Naive thymus-derived CD4-positive, alpha-beta T cell (primary cell): ENCODE measurements at regions of chr9 and their contacts with region 1.

Region 1: GRCh38 chr9:15104826-15105420 is 194.7 kb upstream of the FREM1 start:
- DNase-seq: peak; percentile 7 to 66 (median 52)
- ATAC-seq: peak; percentile 80
- H3K4me3 ChIP-seq: no peak overlapping the region
- H3K4me3 Mint-ChIP-seq: no peak overlapping the region
- H3K27ac ChIP-seq: no peak overlapping the region
- H3K27ac Mint-ChIP-seq: no peak overlapping the region
- H3K4me1 ChIP-seq: no peaks in the 10 kb centered on the region
- H3K4me1 Mint-ChIP-seq: peaks cover 0 to 7% (median 2%) of the 10 kb centered on the region in 7 donors
- H3K27me3 ChIP-seq: no peaks in the 10 kb centered on the region
- H3K27me3 Mint-ChIP-seq: peaks cover 0 to 11% (median 6%) of the 10 kb centered on the region in 5 donors

Region 2: DNA sequence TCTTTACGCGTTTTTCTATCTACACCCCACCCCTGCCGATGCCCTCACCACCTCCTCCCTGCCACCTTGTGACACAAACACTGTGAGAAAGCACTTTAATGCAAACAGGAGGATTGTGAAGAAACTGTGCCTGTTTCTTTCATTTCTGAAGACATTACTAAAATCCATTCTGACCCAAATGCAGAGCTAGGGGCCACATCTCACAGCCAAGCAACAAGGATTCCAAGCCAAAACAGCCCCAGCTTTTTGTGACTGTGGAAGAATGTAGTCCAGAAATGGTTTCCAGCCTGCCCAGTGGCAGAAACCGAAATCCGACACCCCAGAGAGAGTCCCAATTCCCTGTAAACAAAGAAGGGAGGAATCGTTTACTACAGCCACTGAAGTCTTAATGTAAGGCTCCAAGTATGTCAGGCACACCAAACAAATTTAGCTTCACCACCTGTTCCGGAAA is 11.2 kb after region 1 on chr9:
- CTCF ChIA-PET with region 1: no interaction called
- POLR2A ChIA-PET with region 1: no interaction called
- intact Hi-C with region 1: loop called in 1 of 2 experiments (anchors 1 kb)
- DNase-seq: no peak
- ATAC-seq: no peak
- H3K4me3 ChIP-seq: no peak overlapping the region
- H3K4me3 Mint-ChIP-seq: no peak overlapping the region
- H3K27ac ChIP-seq: no peak overlapping the region
- H3K27ac Mint-ChIP-seq: no peak overlapping the region
- H3K4me1 ChIP-seq: peaks cover 0 to under 1% of the 10 kb centered on the region in 2 donors
- H3K4me1 Mint-ChIP-seq: peaks cover under 1 to 22% (median 13%) of the 10 kb centered on the region in 7 donors
- H3K27me3 ChIP-seq: no peaks in the 10 kb centered on the region
- H3K27me3 Mint-ChIP-seq: peaks cover 0 to 12% (median 0%) of the 10 kb centered on the region in 5 donors

Region 3: DNA sequence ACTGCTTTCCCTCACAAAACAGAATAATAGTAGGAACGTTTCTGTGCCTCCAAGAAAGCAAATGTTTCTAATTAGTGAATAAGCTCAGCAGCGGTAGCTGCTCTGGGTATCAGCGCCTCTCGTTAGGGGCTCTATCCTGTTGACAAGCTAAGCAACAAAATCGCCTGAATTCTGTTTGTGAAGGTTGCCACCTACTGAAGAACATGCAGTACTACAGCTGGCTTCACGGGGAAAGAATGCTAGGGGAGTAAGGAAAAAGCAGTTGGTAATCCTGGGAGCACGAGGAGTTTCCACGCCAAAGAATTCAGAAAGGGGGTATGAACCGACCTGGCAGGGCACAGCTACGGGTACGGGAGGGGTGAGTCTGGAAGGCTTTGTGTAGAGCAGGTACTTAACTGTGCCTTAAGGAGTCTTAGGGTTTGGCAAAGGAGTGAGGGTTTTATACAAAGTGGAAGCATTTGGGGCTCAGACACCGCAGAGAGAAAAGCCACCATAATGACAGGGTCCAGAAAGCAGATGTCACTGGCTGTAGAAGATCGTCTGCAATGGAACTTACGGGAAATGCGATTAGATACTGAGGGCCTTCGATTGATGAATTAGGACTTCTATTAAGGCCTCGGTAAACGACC is 30.4 kb after region 1 on chr9:
- CTCF ChIA-PET with region 1: interaction called, 47 read pairs
- POLR2A ChIA-PET with region 1: interaction called, 3 read pairs
- intact Hi-C with region 1: loop called (anchors 1 kb)
- DNase-seq: peak in 8 of 9 donors; percentile 27 to 73 (median 59)
- ATAC-seq: peak; percentile 92
- H3K4me3 ChIP-seq: no peak overlapping the region
- H3K4me3 Mint-ChIP-seq: peak overlapping the region in 6 of 10 donors; percentile 3 to 40 (median 32)
- H3K27ac ChIP-seq: no peak overlapping the region
- H3K27ac Mint-ChIP-seq: peak overlapping the region in 1 of 9 donors; percentile 32
- H3K4me1 ChIP-seq: no peaks in the 10 kb centered on the region
- H3K4me1 Mint-ChIP-seq: peaks cover 4 to 10% (median 5%) of the 10 kb centered on the region in 7 donors
- H3K27me3 ChIP-seq: no peaks in the 10 kb centered on the region
- H3K27me3 Mint-ChIP-seq: peaks cover 0 to 4% (median 3%) of the 10 kb centered on the region in 5 donors

Region 4: GRCh38 chr9:15142878-15143534 is 38.1 kb after region 1 on chr9:
- CTCF ChIA-PET with region 1: interaction called, 3 read pairs
- POLR2A ChIA-PET with region 1: no interaction called
- intact Hi-C with region 1: loop called (anchors 2 kb)
- DNase-seq: peak in 7 of 9 donors; percentile 7 to 45 (median 22)
- ATAC-seq: peak; percentile 83
- H3K4me3 ChIP-seq: no peak overlapping the region
- H3K4me3 Mint-ChIP-seq: no peak overlapping the region
- H3K27ac ChIP-seq: no peak overlapping the region
- H3K27ac Mint-ChIP-seq: no peak overlapping the region
- H3K4me1 ChIP-seq: no peaks in the 10 kb centered on the region
- H3K4me1 Mint-ChIP-seq: peaks cover 0 to 9% (median 3%) of the 10 kb centered on the region in 7 donors
- H3K27me3 ChIP-seq: no peaks in the 10 kb centered on the region
- H3K27me3 Mint-ChIP-seq: peaks cover 0 to 14% (median 5%) of the 10 kb centered on the region in 5 donors

Region 5: DNA sequence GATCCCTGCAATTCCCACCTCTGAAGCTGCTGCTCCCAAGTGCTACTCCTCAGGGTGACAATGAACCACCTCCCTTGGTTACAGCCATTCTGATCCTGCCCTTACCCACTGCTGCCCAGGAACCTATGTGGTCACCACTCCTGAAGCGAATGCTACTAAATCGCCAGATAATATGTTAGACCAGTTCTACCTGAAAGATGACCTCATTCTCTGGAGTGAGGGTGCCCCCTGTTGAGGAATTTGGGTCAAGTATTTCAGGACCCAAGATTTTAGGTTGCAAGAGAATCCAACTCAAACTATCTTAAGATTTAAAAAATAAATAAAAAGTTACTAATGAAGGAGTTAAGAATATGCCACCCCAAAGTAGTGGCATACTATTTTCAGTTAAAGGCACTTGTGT is 312.0 kb after region 1 on chr9:
- CTCF ChIA-PET with region 1: no interaction called
- POLR2A ChIA-PET with region 1: no interaction called
- intact Hi-C with region 1: loop called in 1 of 2 experiments (anchors 2 kb)
- DNase-seq: peak in 7 of 9 donors; percentile 21 to 45 (median 39)
- ATAC-seq: no peak
- H3K4me3 ChIP-seq: no peak overlapping the region
- H3K4me3 Mint-ChIP-seq: no peak overlapping the region
- H3K27ac ChIP-seq: no peak overlapping the region
- H3K27ac Mint-ChIP-seq: no peak overlapping the region
- H3K4me1 ChIP-seq: no peaks in the 10 kb centered on the region
- H3K4me1 Mint-ChIP-seq: peaks cover 0 to 10% (median 2%) of the 10 kb centered on the region in 7 donors
- H3K27me3 ChIP-seq: no peaks in the 10 kb centered on the region
- H3K27me3 Mint-ChIP-seq: peaks cover 0 to 7% (median 0%) of the 10 kb centered on the region in 5 donors

Region 6: DNA sequence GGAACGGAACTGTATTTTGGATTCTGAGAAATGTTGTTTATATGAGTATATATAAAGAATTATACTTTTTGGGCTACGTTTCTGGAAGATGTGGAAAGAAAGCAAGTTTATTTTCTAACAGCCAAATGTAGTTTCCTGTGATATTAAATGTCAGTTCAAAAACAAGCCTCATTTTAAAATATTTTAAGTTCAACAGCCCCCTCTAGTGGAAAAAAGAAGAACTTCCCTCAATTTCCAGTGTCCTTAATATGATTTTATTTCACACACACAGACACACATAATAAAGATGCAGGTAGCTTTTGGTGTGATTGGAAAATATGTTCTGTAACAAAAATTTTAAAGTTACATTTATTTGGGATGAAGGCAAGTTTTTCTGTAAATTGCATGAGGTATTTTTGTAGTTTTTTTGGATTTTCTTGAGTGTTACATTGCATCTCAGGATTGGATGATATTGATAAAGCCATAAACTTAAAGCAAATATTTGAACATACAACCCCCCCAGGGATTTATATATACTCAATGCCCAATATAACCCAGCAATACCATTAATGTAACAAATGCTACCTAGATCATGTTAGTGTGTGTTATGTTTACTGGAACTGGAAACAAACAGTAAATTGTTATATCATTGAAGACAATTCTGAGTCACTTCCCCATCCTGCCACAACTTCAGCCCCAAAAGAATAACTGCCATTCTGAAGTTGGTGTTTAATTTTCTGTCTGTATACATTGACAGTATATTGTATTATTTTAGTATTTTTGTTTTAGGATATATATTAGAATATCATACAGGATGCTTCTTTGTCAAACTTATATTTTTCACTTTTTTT is 501.9 kb after region 1 on chr9:
- CTCF ChIA-PET with region 1: no interaction called
- POLR2A ChIA-PET with region 1: no interaction called
- intact Hi-C with region 1: loop called (anchors 1 to 10 kb)
- DNase-seq: peak in 7 of 9 donors; percentile 29 to 71 (median 60)
- ATAC-seq: peak; percentile 55
- H3K4me3 ChIP-seq: no peak overlapping the region
- H3K4me3 Mint-ChIP-seq: no peak overlapping the region
- H3K27ac ChIP-seq: no peak overlapping the region
- H3K27ac Mint-ChIP-seq: no peak overlapping the region
- H3K4me1 ChIP-seq: no peaks in the 10 kb centered on the region
- H3K4me1 Mint-ChIP-seq: peaks cover 0 to 7% (median 0%) of the 10 kb centered on the region in 7 donors
- H3K27me3 ChIP-seq: no peaks in the 10 kb centered on the region
- H3K27me3 Mint-ChIP-seq: no peaks in the 10 kb centered on the region

Region 7: DNA sequence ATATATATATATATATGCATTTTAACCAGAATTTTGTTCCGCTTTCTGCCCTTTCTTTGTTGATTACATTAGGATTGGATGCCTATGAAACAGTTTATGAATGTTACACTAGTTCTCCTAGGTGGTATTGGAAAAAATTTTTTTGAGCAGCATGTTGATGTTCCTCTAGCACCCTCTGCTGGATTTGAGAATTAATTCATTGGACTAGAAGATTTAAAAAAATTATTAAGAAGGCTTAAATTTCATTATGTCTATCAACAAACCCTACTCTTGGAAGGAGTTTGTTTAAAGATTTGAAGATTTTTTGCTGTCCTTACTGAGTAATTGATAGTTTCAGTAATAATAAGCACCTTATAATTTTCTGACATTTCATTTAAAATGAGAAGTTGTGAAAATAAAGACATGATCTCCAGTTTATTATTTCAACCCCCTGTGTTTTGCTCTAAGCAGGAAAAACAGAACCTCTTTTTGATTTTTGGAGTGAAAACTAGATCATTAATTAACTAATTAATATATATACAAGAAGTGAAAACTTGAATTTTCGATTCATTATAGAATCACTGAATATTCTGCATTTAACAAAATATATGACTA is 537.5 kb after region 1 on chr9:
- CTCF ChIA-PET with region 1: no interaction called
- POLR2A ChIA-PET with region 1: no interaction called
- intact Hi-C with region 1: loop called in 1 of 2 experiments (anchors 1 kb)
- DNase-seq: peak in 5 of 9 donors; percentile 10 to 31 (median 18)
- ATAC-seq: no peak
- H3K4me3 ChIP-seq: no peak overlapping the region
- H3K4me3 Mint-ChIP-seq: no peak overlapping the region
- H3K27ac ChIP-seq: no peak overlapping the region
- H3K27ac Mint-ChIP-seq: no peak overlapping the region
- H3K4me1 ChIP-seq: no peaks in the 10 kb centered on the region
- H3K4me1 Mint-ChIP-seq: no peaks in the 10 kb centered on the region
- H3K27me3 ChIP-seq: no peaks in the 10 kb centered on the region
- H3K27me3 Mint-ChIP-seq: peaks cover 0 to 8% (median 6%) of the 10 kb centered on the region in 5 donors